ENCODE measurements at regions of chr10 and their contacts with region 1.

Region 1: GRCh38 chr10:54402576-54402975 is 398.5 kb downstream of the PCDH15 start:
- DNase-seq: peak; percentile 1
- H3K4me3 ChIP-seq: no peak overlapping the region
- H3K27ac ChIP-seq: no peak overlapping the region
- H3K4me1 ChIP-seq: no peaks in the 10 kb centered on the region
- H3K27me3 ChIP-seq: no peaks in the 10 kb centered on the region
- CTCF ChIP-seq: peak; percentile 61
- EP300 ChIP-seq: no peak
- RAD21 ChIP-seq: peak; percentile 72

Region 2: DNA sequence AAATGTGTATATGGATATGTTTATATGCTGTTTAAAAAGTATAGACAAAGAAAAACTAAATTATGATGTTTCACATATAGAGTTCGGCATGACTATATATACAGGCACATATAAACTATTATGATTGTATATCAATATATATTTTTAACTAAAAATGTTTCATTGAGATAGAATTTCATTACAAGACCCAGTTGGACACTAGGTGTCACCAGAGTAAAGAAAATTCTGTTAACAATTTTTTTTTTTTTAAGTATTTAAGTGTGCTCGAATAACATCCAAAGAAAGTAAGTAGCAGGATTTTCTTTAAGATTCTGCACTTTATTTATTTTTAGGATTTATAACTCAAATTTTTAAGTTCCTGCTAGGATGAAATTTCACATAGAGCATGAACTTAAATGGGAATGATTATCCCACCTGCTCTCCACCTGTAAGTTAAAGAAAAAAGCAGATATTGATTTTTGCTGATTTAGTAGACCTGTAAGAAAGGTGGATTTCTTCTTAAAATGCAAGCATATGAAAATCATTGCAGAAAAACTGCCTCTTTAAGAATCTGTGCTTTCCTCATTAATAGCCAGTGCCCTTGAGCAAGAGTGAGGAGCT is 563.0 kb before region 1 on chr10:
- CTCF ChIA-PET with region 1: interaction called, 11 read pairs
- POLR2A ChIA-PET with region 1: no interaction called
- DNase-seq: peak; percentile 9
- H3K4me3 ChIP-seq: no peak overlapping the region
- H3K27ac ChIP-seq: no peak overlapping the region
- H3K4me1 ChIP-seq: peaks cover 0 to 8% of the 10 kb centered on the region in 2 experiments; a peak in 2 of 4 replicates
- H3K27me3 ChIP-seq: no peaks in the 10 kb centered on the region
- CTCF ChIP-seq: peak; percentile 66
- EP300 ChIP-seq: no peak
- RAD21 ChIP-seq: peak; percentile 62

Measured in SK-N-SH (cell line).